PC-9 (cell line): ENCODE measurements at regions of chrX and their contacts with region 1.

Region 1: DNA sequence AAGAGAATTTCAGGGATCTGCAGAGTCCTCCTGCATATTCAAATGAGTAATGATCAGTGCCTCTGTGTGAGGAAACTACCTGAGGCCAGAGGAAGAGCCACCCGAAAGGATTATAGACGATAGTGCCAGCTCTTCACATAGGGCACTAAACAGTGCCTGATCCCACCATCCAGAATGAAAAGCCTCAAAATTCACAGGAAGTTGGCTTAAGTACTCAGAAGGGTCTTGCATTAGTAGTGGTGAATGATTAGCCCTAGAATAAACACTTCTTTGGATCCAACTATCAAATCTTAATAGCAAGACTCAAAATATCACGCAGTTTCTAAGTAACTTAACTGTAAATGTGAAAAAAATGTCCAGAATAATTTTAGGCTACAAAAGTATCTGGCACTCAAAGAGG is 324.4 kb downstream of the ZNF674 start:
- DNase-seq: no peak
- H3K4me3 ChIP-seq: no peak overlapping the region
- H3K27ac ChIP-seq: no peak overlapping the region
- H3K4me1 ChIP-seq: no peaks in the 10 kb centered on the region
- H3K27me3 ChIP-seq: no peaks in the 10 kb centered on the region
- CTCF ChIP-seq: no peak

Region 2: DNA sequence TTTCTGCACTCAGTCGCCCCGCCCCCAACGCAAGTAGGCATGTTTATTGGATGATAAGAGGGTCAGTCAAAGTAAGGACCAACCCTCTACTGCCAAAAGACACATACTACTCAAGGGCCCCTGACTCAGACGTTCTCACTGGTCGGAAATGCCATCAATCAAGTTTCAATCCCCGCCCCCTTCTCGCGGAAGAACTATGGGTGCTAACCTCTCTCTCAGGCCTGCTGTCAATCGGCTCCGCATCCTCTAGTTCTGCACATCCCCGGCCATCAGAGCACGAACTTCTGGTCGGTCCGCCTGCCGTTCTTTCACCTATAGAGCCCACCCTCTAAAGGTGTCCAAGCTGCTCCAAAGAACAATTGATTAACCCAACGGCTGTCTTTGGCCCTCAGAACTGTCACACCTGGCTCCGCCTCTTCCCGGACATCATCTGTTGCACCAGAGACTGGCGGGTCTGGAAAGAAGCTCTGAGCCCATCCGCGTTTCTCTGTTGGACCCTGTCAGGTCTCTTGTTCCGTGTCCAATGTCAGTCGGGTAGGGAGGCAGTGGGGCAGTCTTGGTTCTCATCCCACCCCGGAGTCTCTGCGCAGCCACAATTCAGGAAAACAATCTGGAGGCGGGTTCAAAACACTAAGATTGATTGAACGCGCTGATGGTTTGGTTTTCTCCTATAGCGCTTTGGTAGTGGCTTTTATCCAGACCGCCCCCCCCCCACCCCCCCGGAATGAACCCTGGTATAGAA is 908.5 kb after region 1 on chrX:
- CTCF ChIA-PET with region 1: no interaction called
- POLR2A ChIA-PET with region 1: interaction called, 10 read pairs
- intact Hi-C with region 1: no loop called
- DNase-seq: peak; percentile 85
- H3K4me3 ChIP-seq: peak overlapping the region; percentile 59; the same call in 1 of the 2 replicates
- H3K27ac ChIP-seq: no peak overlapping the region
- H3K4me1 ChIP-seq: no peaks in the 10 kb centered on the region
- H3K27me3 ChIP-seq: no peaks in the 10 kb centered on the region
- CTCF ChIP-seq: no peak